Activated CD8-positive, alpha-beta T cell treated with anti-CD3 and anti-CD28 coated beads for 36 hours (primary cell): ENCODE measurements at regions of chr2 and their contacts with region 1.

Region 1: GRCh38 chr2:174473796-174474195 is 13.0 kb downstream of the GPR155 start:
- DNase-seq: no peak
- ATAC-seq: no peak
- H3K4me3 Mint-ChIP-seq: no peak overlapping the region
- H3K27ac Mint-ChIP-seq: no peak overlapping the region
- H3K4me1 Mint-ChIP-seq: peaks cover 8% of the 10 kb centered on the region
- H3K27me3 Mint-ChIP-seq: no peaks in the 10 kb centered on the region
- CTCF ChIP-seq: no peak

Region 2: GRCh38 chr2:174395284-174395968 is 78.4 kb before region 1 on chr2 and contains the start of gene SCRN3:
- CTCF ChIA-PET with region 1: no interaction called
- POLR2A ChIA-PET with region 1: no interaction called
- intact Hi-C with region 1: no loop called
- DNase-seq: peak; percentile 85
- ATAC-seq: peak; percentile 95
- H3K4me3 Mint-ChIP-seq: peak within 1 kb of the TSS; percentile 100
- H3K27ac Mint-ChIP-seq: peak within 1 kb of the TSS; percentile 100
- H3K4me1 Mint-ChIP-seq: peaks cover 36% of the 10 kb centered on the region
- H3K27me3 Mint-ChIP-seq: no peaks in the 10 kb centered on the region
- CTCF ChIP-seq: no peak
- total RNA-seq, gene SCRN3: 12.9 to 13.7 TPM

Region 3: GRCh38 chr2:174428214-174428613 is 45.6 kb before region 1 on chr2:
- CTCF ChIA-PET with region 1: no interaction called
- POLR2A ChIA-PET with region 1: no interaction called
- intact Hi-C with region 1: no loop called
- DNase-seq: no peak
- ATAC-seq: no peak
- H3K4me3 Mint-ChIP-seq: no peak overlapping the region
- H3K27ac Mint-ChIP-seq: no peak overlapping the region
- H3K4me1 Mint-ChIP-seq: no peaks in the 10 kb centered on the region
- H3K27me3 Mint-ChIP-seq: no peaks in the 10 kb centered on the region
- CTCF ChIP-seq: no peak

Region 4: GRCh38 chr2:174487108-174487819 is 13.5 kb after region 1 on chr2:
- CTCF ChIA-PET with region 1: interaction called, 12 read pairs
- POLR2A ChIA-PET with region 1: interaction called, 7 read pairs
- intact Hi-C with region 1: no loop called
- DNase-seq: peak; percentile 100
- ATAC-seq: peak; percentile 93
- H3K4me3 Mint-ChIP-seq: peak overlapping the region; percentile 95
- H3K27ac Mint-ChIP-seq: peak overlapping the region; percentile 92
- H3K4me1 Mint-ChIP-seq: peaks cover 51% of the 10 kb centered on the region
- H3K27me3 Mint-ChIP-seq: no peaks in the 10 kb centered on the region
- CTCF ChIP-seq: no peak